ENCODE measurements at regions of chr4 and their contacts with region 1.

Region 1: DNA sequence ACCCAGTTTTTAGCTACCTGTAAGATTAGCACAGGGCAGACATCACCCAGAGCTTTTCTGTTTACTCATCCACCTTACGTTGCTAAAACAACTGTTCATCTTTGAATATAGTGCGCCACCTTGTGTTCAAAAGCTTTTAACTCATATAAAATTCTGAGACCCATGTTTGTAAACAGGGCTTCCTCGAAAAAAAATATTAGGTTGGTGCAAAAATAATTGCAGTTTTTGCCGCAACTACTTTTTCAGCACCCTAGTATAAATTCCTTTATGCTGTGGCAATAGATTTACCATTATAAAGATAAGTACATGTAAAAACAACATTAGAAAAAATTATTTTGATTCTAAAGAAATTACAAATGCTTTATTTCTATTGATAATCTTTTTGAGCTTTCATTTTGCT is 147.9 kb downstream of the LRBA start:
- DNase-seq: peak; percentile 50 to 75 (median 68)
- H3K4me3 ChIP-seq: no peak overlapping the region
- H3K4me3 Mint-ChIP-seq: no peak overlapping the region
- H3K27ac ChIP-seq: no peak overlapping the region
- H3K27ac Mint-ChIP-seq: peak overlapping the region in 1 of 7 donors; percentile 3
- H3K4me1 ChIP-seq: no peaks in the 10 kb centered on the region
- H3K4me1 Mint-ChIP-seq: peaks cover 0 to 2% (median 0%) of the 10 kb centered on the region in 4 donors
- H3K27me3 ChIP-seq: no peaks in the 10 kb centered on the region
- H3K27me3 Mint-ChIP-seq: no peaks in the 10 kb centered on the region

Region 2: DNA sequence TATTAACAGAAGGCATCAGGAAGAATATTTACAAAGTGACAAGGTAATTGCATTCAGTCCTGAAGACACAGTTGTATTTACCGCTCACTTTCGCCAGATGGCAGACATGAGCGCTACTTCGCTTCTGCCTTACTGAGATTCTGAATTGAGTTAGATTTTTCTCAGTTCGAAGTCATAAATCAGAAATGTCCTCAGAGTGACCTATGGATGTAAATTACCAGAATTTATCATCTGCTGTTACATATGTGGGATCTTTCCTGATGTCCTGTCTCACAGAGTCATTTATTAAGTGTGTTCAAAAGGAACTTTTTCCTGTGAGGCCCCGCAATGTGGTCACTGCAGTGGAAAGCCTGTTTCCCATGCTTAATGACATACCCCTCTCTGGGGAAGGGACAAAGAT is 886.2 kb before region 1 on chr4:
- CTCF ChIA-PET with region 1: interaction called, 53 read pairs
- POLR2A ChIA-PET with region 1: no interaction called
- intact Hi-C with region 1: loop called (anchors 1 kb)
- DNase-seq: peak; percentile 25 to 32 (median 30)
- H3K4me3 ChIP-seq: no peak overlapping the region
- H3K4me3 Mint-ChIP-seq: no peak overlapping the region
- H3K27ac ChIP-seq: no peak overlapping the region
- H3K27ac Mint-ChIP-seq: no peak overlapping the region
- H3K4me1 ChIP-seq: peaks cover 9% of the 10 kb centered on the region
- H3K4me1 Mint-ChIP-seq: peaks cover 3 to 9% (median 6%) of the 10 kb centered on the region in 4 donors
- H3K27me3 ChIP-seq: no peaks in the 10 kb centered on the region
- H3K27me3 Mint-ChIP-seq: no peaks in the 10 kb centered on the region

Region 3: GRCh38 chr4:150297861-150298474 is 569.2 kb before region 1 on chr4:
- CTCF ChIA-PET with region 1: interaction called, 28 read pairs
- POLR2A ChIA-PET with region 1: no interaction called
- intact Hi-C with region 1: loop called (anchors 1 kb)
- DNase-seq: peak in 4 of 5 donors; percentile 2 to 10 (median 6)
- H3K4me3 ChIP-seq: no peak overlapping the region
- H3K4me3 Mint-ChIP-seq: no peak overlapping the region
- H3K27ac ChIP-seq: no peak overlapping the region
- H3K27ac Mint-ChIP-seq: no peak overlapping the region
- H3K4me1 ChIP-seq: no peaks in the 10 kb centered on the region
- H3K4me1 Mint-ChIP-seq: peaks cover 0 to 4% (median 3%) of the 10 kb centered on the region in 4 donors
- H3K27me3 ChIP-seq: no peaks in the 10 kb centered on the region
- H3K27me3 Mint-ChIP-seq: no peaks in the 10 kb centered on the region

Region 4: GRCh38 chr4:150828159-150828558 is 39.0 kb before region 1 on chr4:
- CTCF ChIA-PET with region 1: interaction called, 18 read pairs
- POLR2A ChIA-PET with region 1: interaction called, 3 read pairs
- intact Hi-C with region 1: loop called (anchors 5 kb)
- DNase-seq: peak; percentile 68 to 79 (median 75)
- H3K4me3 ChIP-seq: peak overlapping the region in 1 of 2 donors; percentile 16
- H3K4me3 Mint-ChIP-seq: peak overlapping the region; percentile 52 to 90 (median 83)
- H3K27ac ChIP-seq: peak overlapping the region; percentile 50
- H3K27ac Mint-ChIP-seq: peak overlapping the region; percentile 77 to 93 (median 85)
- H3K4me1 ChIP-seq: peaks cover 37% of the 10 kb centered on the region
- H3K4me1 Mint-ChIP-seq: peaks cover 40 to 66% (median 55%) of the 10 kb centered on the region in 4 donors
- H3K27me3 ChIP-seq: no peaks in the 10 kb centered on the region
- H3K27me3 Mint-ChIP-seq: no peaks in the 10 kb centered on the region

Region 5: GRCh38 chr4:150855981-150856510 is 11.1 kb before region 1 on chr4:
- CTCF ChIA-PET with region 1: interaction called, 35 read pairs
- POLR2A ChIA-PET with region 1: no interaction called
- intact Hi-C with region 1: no loop called
- DNase-seq: no peak
- H3K4me3 ChIP-seq: no peak overlapping the region
- H3K4me3 Mint-ChIP-seq: no peak overlapping the region
- H3K27ac ChIP-seq: no peak overlapping the region
- H3K27ac Mint-ChIP-seq: peak overlapping the region in 1 of 7 donors; percentile 14
- H3K4me1 ChIP-seq: no peaks in the 10 kb centered on the region
- H3K4me1 Mint-ChIP-seq: peaks cover 0 to 5% (median under 1%) of the 10 kb centered on the region in 4 donors
- H3K27me3 ChIP-seq: no peaks in the 10 kb centered on the region
- H3K27me3 Mint-ChIP-seq: no peaks in the 10 kb centered on the region

Measured in CD4-positive, alpha-beta memory T cell (primary cell).